HepG2 (cell line): ENCODE measurements at regions of chr1 and their contacts with region 1.

Region 1: DNA sequence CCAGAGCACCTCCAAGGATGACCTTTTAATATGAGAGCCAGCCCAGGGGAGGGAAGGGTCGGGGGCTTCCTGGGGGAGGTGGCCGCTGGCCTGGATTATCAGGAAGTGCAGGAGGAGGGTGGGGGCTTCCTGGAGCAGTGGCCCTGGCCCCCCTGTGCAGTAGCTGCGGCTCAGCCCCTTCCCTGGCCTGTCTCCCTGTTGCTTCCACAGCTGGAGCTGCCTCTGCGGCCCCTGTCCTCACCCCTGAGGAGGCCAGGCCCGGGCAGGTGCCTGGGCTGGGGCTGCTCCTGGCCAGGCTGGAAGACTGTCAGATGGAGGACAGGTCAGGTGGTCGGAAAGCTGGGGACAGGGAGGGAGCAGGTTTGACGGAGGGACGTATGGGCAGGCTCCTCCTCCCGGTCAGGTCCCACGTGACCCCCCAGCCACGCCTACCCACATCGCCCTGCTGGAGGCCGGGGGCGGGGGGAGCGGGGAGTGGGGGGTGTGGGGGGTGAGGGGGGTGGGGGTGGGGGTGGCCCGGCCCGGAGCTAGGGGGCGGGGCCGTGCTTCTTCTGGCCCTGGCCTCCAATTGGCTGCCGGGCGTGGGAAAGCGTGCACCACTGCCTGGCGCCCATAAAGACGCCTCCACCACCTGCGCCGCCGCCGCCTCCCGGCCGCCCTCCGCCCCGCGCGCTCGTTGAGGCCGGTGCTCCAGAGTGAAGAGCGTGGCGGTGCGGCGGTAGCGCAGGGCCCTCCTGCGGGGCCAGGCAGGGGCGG is 10.2 kb upstream of the TNFRSF14 start:
- DNase-seq: peak; percentile 87
- ATAC-seq: peak; percentile 62
- H3K4me3 ChIP-seq: peak overlapping the region; percentile 61 to 80 (median 64)
- H3K27ac ChIP-seq: peak overlapping the region; percentile 51
- H3K4me1 ChIP-seq: peaks cover 77% of the 10 kb centered on the region
- H3K27me3 ChIP-seq: peaks cover 4 to 6% of the 10 kb centered on the region in 2 experiments; a peak in 2 of 5 replicates
- CTCF ChIP-seq: no peak
- EP300 ChIP-seq: no peak
- POLR2A ChIP-seq: peak in 1 of 2 experiments; percentile 54; a peak in 2 of 4 replicates
- RAD21 ChIP-seq: no peak

Region 2: DNA sequence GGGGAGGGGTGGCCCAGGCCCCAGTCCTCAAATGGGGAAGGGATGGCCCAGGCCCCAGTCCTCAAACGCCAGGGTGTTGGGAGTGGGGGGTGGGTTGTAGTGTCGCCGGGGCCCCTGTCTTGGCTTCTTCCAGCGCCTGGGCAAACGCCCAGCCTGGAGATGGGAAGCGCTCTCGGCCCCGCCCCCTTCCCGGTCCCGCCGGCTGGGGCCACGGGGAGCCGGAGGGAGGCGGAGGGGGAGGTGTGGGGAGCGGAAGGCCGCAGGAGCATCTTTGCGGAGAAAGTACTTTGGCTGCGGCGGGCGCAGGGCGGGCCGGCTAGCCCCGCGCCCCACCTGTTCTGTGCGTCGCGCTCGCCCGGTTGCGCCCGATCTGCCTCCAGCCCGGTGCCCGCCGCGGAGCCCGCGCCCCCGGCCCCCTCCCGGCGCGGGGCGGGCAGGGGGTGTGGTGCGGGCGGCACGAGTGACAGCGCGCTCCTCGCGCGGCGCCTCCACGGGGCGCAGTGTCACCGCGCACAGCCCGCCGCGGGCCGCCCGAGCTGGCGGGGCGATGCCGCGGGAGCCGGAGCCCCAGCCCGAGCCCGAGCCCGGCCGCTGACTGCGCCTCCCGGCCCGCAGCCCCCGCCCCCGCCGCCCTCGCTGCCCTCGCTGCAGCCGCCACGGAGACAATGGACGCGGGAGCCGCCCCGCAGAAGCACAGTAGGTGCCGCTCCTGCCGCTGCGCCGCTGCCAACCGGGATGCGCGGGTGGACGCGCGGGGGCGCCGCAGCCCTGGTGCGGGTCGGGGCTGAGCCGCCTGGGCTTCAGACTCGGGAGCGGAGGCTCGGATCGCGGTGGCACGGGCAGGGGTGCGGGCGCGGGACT is 102.4 kb before region 1 on chr1:
- CTCF ChIA-PET with region 1: no interaction called
- POLR2A ChIA-PET with region 1: no interaction called
- in situ Hi-C with region 1: no loop called
- intact Hi-C with region 1: no loop called
- DNase-seq: no peak
- ATAC-seq: no peak
- H3K4me3 ChIP-seq: no peak overlapping the region
- H3K27ac ChIP-seq: no peak overlapping the region
- H3K4me1 ChIP-seq: no peaks in the 10 kb centered on the region
- H3K27me3 ChIP-seq: peaks cover 42 to 90% of the 10 kb centered on the region in 2 experiments
- CTCF ChIP-seq: peak; percentile 63
- EP300 ChIP-seq: no peak
- POLR2A ChIP-seq: no peak
- RAD21 ChIP-seq: no peak

Region 3: GRCh38 chr1:2496087-2496622 is 49.8 kb before region 1 on chr1:
- CTCF ChIA-PET with region 1: no interaction called
- POLR2A ChIA-PET with region 1: no interaction called
- in situ Hi-C with region 1: no loop called
- intact Hi-C with region 1: no loop called
- DNase-seq: peak; percentile 28
- ATAC-seq: peak; percentile 60
- H3K4me3 ChIP-seq: peak overlapping the region in 2 of 3 experiments; percentile 23 to 38; a peak in 3 of 6 replicates
- H3K27ac ChIP-seq: no peak overlapping the region
- H3K4me1 ChIP-seq: peaks cover 33% of the 10 kb centered on the region
- H3K27me3 ChIP-seq: peaks cover 31 to 71% of the 10 kb centered on the region in 2 experiments
- CTCF ChIP-seq: no peak
- EP300 ChIP-seq: 0 out of 4 replicates have a peak, but pooled peaks of 1 of the 2 experiments have one; percentile 30
- POLR2A ChIP-seq: no peak
- RAD21 ChIP-seq: no peak

Region 4: DNA sequence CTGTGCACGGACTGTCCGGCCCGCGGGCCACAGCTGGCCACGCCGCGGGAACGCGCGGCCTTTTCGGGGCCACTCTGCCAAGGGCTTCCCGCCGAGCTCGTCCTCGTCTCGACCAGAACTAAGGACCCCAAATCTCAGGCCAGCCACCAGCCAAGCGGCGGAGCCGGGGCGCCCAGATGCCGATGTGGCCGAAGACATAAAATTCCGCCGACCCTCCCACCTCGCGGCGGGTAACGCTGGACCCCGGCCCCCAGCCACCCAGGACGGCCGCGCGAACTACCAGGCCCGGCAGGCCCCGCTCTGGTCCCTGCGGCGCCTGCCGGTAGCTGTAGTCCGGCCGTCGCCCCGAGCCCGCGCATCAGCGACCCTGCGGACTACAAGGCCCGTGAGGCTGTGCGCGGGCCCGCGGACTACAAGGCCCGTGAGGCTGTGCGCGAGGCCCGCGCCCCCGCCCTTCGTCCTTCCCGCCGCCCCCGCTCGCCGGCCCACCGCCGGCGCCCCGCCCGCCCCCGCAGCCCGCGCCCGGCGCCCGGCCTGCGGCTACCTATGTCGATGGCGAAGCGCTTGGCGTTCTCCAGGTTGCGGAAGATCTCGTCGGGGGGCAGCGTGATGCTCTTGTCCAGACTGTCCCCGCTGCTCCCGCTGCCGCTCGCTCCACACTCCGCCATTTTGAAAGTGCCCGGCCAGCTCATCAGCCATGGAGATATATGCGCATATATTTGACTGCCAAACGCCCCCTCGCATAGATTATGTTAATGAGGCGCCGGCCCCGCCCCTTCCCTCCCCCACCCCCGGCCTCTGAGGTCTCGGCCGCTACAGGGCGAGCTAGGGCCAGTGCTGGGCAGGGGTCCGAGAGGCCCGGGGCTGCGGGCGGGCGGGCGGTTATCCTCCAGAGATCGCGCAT is 19.8 kb before region 1 on chr1 and contains the start of gene PANK4:
- CTCF ChIA-PET with region 1: interaction called, 9 read pairs
- POLR2A ChIA-PET with region 1: interaction called, 38 read pairs
- in situ Hi-C with region 1: no loop called
- intact Hi-C with region 1: loop called (anchors 2 kb)
- DNase-seq: peak; percentile 84
- ATAC-seq: peak; percentile 86
- H3K4me3 ChIP-seq: peak within 1 kb of the TSS; percentile 65 to 96 (median 69)
- H3K27ac ChIP-seq: peak within 1 kb of the TSS; percentile 49
- H3K4me1 ChIP-seq: peaks cover 66% of the 10 kb centered on the region
- H3K27me3 ChIP-seq: peaks cover 9 to 36% of the 10 kb centered on the region in 2 experiments
- CTCF ChIP-seq: no peak
- EP300 ChIP-seq: no peak
- POLR2A ChIP-seq: peak in 1 of 2 experiments; percentile 73; a peak in 2 of 4 replicates
- RAD21 ChIP-seq: peak; percentile 24; the same call in 1 of the 2 replicates
- total RNA-seq, gene PANK4: 9.2 and 19.3 TPM in 2 replicates